Thyroid gland (tissue), 4 donors: ENCODE measurements at regions of chr12 and their contacts with region 1.

Region 1: DNA sequence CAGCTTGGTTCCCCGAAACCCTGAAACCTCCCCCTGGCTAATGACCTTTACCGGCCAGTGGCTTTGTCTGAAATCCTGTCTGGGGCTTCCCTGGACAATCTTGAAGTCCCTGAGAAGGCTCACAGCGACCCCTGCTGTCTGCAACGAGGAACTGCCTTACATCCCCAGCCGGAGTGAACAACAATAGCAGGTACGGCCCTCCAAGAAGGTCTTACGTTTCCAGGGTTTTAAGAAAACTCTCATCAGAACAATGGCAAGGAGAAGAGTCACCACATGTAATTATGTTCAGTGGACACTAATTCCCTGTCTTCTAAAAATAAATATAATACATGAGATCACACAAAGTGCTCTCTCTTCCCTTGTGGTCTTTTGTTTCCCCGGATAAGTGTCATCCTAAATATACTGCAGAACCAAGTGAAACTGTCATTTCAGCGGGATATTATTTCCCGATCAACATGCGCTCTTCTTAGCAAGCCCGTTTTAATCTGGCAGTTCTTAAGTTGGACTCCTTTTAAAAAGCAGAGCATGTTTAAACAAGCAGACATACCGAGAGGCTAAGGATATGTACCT is 53.3 kb downstream of the RBM19 start:
- DNase-seq: peak; percentile 53 to 61
- H3K4me3 ChIP-seq: no peak overlapping the region
- H3K27ac ChIP-seq: no peak overlapping the region
- H3K4me1 ChIP-seq: no peaks in the 10 kb centered on the region
- H3K27me3 ChIP-seq: no peaks in the 10 kb centered on the region
- CTCF ChIP-seq: peak in 5 of 6 experiments; percentile 49 to 83 (median 65)
- POLR2A ChIP-seq: no peak

Region 2: DNA sequence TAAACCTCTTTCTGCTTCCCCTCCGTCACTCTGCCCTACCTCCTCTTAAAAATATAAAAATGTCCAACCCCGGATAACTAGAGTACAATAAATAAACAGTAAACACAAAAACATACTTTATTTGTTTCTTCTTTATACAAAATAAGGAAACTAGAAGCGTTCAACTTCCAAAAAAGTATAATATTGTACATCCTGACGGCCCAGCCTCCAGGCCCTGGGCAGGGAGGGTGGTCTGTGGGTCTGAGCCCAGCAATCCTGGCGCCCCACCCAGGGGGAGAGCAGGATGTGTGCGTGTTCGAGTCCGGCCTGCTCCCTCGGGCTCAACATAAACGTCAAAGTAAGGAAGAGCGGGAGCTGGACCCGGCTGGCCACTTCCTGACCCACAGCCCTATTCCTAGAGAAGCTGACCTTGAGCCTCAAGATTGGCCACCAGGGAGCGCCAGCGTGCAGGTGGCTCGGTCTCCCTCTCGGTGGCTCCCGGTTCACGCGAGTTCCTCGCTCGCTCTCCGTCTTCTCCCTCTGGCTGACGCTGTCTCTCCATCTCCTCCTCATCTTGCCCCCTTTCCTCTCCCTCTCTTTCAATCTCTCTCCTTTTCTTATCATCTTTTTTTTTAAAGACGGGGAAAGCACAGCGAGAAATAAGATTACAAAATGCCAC is 450.6 kb before region 1 on chr12:
- intact Hi-C with region 1: loop called (anchors 10 kb)
- DNase-seq: peak; percentile 85 to 88
- H3K4me3 ChIP-seq: no peak overlapping the region
- H3K27ac ChIP-seq: no peak overlapping the region
- H3K4me1 ChIP-seq: peaks cover 30 to 43% of the 10 kb centered on the region in 2 donors
- H3K27me3 ChIP-seq: peaks cover 45% of the 10 kb centered on the region
- CTCF ChIP-seq: peak; percentile 58 to 92 (median 73)
- POLR2A ChIP-seq: no peak

Region 3: DNA sequence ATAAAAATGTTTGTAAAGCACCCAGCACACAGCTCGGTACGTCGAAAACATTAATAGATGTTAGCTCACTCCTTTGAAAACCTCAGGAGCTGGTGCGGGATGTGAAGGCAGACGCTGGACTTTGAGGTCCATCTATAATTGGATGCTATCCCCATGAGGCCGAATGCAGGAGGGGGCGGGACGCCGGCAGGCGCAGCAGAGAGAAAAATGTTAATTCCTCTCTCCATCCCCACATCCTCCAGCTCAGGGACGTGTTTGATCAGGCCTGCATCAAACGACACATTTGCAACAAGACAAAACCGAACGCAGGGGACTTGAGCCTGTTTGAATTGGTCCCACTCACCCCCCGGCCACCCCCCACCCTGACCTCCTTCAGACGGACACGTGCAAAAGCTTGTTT is 177.7 kb before region 1 on chr12:
- intact Hi-C with region 1: no loop called
- DNase-seq: no peak
- H3K4me3 ChIP-seq: no peak overlapping the region
- H3K27ac ChIP-seq: no peak overlapping the region
- H3K4me1 ChIP-seq: no peaks in the 10 kb centered on the region
- H3K27me3 ChIP-seq: no peaks in the 10 kb centered on the region
- CTCF ChIP-seq: no peak
- POLR2A ChIP-seq: no peak